ENCODE measurements at regions of chr1 and their contacts with region 1.

Region 1: DNA sequence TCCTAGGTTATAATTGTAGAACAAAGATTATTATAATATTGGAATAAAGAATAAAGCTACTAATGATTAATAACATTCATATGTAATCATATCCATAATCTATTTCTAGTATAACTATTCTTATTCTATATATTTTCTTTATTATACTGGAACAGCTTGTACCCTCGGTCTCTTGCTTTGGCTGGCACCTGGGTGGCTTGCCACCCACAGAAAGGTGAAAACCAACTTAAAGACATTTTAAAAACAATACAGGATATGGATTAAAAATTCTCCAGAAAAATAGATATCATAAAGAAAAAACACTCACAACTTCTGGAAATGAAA is 80.0 kb upstream of the PRRC2C start:
- DNase-seq: no peak
- ATAC-seq: no peak
- H3K4me3 ChIP-seq: no peak overlapping the region
- H3K27ac ChIP-seq: no peak overlapping the region
- H3K4me1 ChIP-seq: no peaks in the 10 kb centered on the region
- H3K27me3 ChIP-seq: no peaks in the 10 kb centered on the region
- CTCF ChIP-seq: no peak
- EP300 ChIP-seq: no peak
- POLR2A ChIP-seq: no peak
- RAD21 ChIP-seq: no peak

Region 2: DNA sequence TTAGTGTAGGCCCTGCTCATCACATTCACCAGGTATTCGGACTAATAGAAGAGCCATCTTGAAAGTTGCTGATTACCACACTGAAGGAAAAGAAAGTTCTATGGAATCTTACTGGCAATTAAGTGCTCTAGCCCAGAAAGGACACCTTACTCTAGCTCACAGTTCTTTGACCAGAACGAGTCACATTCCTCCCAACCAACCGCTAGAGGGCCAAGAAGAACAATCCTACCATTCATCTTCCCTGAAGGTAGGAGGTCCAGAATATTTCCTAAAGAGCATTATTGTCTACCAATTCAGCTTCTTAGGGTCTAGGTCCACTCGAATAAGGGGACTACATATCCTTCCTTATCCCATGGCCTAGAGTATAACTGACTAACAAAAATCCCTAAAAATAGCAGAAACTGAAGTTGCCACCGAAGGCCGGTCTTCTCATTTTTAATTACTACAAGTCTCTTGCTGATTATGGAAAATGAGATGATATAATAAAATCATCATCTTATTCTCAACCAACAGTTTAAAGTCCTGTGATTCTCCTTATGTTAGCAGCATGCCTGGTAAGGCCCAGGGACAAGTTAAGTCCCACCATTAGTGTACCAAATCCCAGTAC is 159.8 kb before region 1 on chr1:
- CTCF ChIA-PET with region 1: no interaction called
- POLR2A ChIA-PET with region 1: no interaction called
- in situ Hi-C with region 1: no loop called
- intact Hi-C with region 1: loop called (anchors 2 kb)
- DNase-seq: peak; percentile 50 to 55 (median 50)
- ATAC-seq: peak; percentile 92
- H3K4me3 ChIP-seq: no peak overlapping the region
- H3K27ac ChIP-seq: no peak overlapping the region
- H3K4me1 ChIP-seq: no peaks in the 10 kb centered on the region
- H3K27me3 ChIP-seq: peaks cover 0 to 4% of the 10 kb centered on the region in 2 experiments; a peak in 1 of 5 replicates
- CTCF ChIP-seq: peak; percentile 57 to 71 (median 61)
- EP300 ChIP-seq: no peak
- POLR2A ChIP-seq: no peak
- RAD21 ChIP-seq: peak in 1 of 2 experiments; percentile 62; a peak in 3 of 4 replicates